Right cardiac atrium (tissue), 5 donors: ENCODE measurements at regions of chr18 and their contacts with region 1.

Region 1: DNA sequence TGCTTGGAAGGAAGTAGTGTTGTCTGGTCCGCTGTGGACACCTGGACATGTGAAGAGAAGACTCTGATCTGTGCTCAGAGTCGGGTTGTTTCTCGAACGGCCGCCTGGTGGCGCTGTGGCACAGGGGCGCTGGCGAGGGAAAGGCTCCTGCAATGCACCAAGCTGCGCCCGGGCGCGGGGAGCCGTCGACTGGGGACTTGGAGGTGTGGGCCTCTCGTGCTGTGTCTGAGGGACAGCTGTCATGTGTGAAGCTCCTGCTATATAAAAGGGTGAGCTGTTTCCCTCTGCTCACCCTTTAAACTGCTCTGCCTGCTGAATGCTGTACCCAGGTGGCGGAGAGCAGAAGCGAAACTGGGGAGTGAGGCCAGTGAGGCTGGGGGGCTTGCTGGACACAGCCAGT is 44.0 kb downstream of the GNAL start:
- DNase-seq: peak; percentile 75 to 91 (median 89)
- ATAC-seq: peak; percentile 90 to 93
- H3K4me3 ChIP-seq: peak overlapping the region; percentile 12
- H3K27ac ChIP-seq: no peak overlapping the region
- H3K4me1 ChIP-seq: no peaks in the 10 kb centered on the region
- H3K27me3 ChIP-seq: no peaks in the 10 kb centered on the region

Region 2: GRCh38 chr18:11553098-11553940 is 179.7 kb before region 1 on chr18:
- intact Hi-C with region 1: no loop called
- DNase-seq: no peak
- ATAC-seq: peak; percentile 53 to 60
- H3K4me3 ChIP-seq: no peak overlapping the region
- H3K27ac ChIP-seq: no peak overlapping the region
- H3K4me1 ChIP-seq: no peaks in the 10 kb centered on the region
- H3K27me3 ChIP-seq: no peaks in the 10 kb centered on the region

Region 3: GRCh38 chr18:11654736-11655605 is 78.1 kb before region 1 on chr18:
- intact Hi-C with region 1: loop called in 2 of 4 experiments (anchors 10 kb)
- DNase-seq: peak; percentile 52 to 84 (median 77)
- ATAC-seq: peak; percentile 66 to 83
- H3K4me3 ChIP-seq: no peak overlapping the region
- H3K27ac ChIP-seq: no peak overlapping the region
- H3K4me1 ChIP-seq: no peaks in the 10 kb centered on the region
- H3K27me3 ChIP-seq: no peaks in the 10 kb centered on the region

Region 4: GRCh38 chr18:11872479-11873136 is 139.6 kb after region 1 on chr18:
- intact Hi-C with region 1: loop called (anchors 5 to 10 kb)
- DNase-seq: no peak
- ATAC-seq: peak; percentile 87 to 90
- H3K4me3 ChIP-seq: no peak overlapping the region
- H3K27ac ChIP-seq: peak overlapping the region; percentile 9
- H3K4me1 ChIP-seq: no peaks in the 10 kb centered on the region
- H3K27me3 ChIP-seq: no peaks in the 10 kb centered on the region

Region 5: DNA sequence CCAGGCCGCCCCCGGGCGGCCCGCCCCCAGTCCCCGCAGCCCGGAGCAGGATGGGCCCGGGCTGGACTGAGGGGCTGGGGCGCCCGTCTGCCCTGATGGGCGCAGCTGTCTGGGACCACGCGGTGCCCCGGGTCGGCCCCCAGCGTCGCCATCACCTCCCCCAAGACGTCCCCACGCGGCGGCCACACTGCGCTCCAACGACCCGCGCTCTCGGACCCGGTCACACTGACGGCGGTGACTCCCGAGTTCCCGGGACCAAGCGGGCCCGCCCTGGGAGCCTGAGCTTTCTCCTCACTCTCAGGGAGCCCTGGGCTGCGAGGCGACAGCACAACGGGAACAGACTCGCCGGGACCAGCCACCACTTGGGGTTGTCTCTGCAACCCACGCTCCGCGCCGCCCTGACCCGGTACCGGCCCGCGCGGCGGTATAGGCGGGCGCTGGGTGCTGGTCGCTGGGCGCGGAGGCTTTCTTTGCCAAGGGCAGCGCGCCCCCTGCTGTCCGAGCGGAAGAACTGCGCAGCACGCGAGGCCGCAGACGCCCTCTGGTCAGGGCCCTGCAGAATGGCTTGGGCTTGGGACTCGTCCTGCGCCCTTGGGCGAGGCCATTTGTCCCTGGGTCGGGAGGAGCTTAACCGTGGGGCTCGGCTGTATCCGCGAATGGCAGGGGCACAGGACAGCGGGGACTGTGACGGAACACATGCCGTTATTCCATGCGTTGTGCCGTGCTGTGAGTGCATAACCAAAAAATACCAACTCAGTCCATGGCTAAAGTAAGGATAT is 305.8 kb after region 1 on chr18:
- intact Hi-C with region 1: loop called in 2 of 4 experiments (anchors 5 to 10 kb)
- DNase-seq: peak; percentile 87 to 94 (median 94)
- ATAC-seq: peak; percentile 95 to 96
- H3K4me3 ChIP-seq: peak overlapping the region; percentile 47
- H3K27ac ChIP-seq: no peak overlapping the region
- H3K4me1 ChIP-seq: no peaks in the 10 kb centered on the region
- H3K27me3 ChIP-seq: no peaks in the 10 kb centered on the region